PC-9 (cell line): ENCODE measurements at regions of chr3 and their contacts with region 1.

Region 1: GRCh38 chr3:100708967-100709841 is at the start of gene TFG:
- DNase-seq: peak; percentile 99 to 100
- H3K4me3 ChIP-seq: peak within 1 kb of the TSS; percentile 84
- H3K27ac ChIP-seq: peak within 1 kb of the TSS; percentile 95
- H3K4me1 ChIP-seq: peaks cover 35% of the 10 kb centered on the region
- H3K27me3 ChIP-seq: no peaks in the 10 kb centered on the region
- CTCF ChIP-seq: no peak
- total RNA-seq, gene TFG: 163 and 224 TPM in 2 replicates

Region 2: DNA sequence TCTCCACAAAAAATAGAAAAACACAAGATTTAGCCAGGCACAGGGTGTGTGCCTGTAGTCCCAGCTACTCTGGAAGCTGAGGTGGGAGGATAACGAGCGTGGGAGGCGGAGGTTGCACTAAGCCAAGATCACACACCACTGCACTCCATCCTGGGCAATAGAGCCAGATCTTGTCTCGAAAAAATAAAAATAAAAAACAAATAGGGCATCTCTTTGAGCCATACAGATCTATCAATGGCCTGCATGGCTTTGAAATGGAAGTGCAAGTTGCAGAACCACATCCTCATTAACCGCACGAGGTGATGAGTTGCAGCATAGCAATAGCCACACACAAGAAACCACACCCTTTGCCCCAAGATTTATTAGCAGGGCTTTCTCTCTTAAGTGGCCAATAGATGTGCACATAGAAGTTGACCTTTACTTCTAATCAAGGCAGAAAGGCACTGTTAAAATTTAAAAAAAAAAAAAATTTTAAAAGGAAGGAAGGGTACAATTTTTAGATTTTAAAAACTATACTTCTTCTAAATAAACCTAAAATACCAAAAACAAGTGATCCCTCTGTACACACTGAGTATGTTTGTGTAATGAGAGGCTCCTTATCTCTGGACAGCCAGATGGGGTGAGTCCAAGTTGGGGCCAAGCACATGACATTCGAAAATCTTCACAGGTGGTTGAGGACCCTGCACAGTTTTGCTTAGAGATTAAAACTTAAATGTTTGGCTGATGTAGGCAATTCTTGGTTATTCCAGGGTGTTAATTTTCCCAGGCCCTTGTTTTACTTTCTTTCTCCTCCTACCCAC is 648.3 kb before region 1 on chr3:
- CTCF ChIA-PET with region 1: no interaction called
- POLR2A ChIA-PET with region 1: interaction called, 11 read pairs
- intact Hi-C with region 1: no loop called
- DNase-seq: no peak
- H3K4me3 ChIP-seq: no peak overlapping the region
- H3K27ac ChIP-seq: no peak overlapping the region
- H3K4me1 ChIP-seq: no peaks in the 10 kb centered on the region
- H3K27me3 ChIP-seq: no peaks in the 10 kb centered on the region
- CTCF ChIP-seq: no peak

Region 3: DNA sequence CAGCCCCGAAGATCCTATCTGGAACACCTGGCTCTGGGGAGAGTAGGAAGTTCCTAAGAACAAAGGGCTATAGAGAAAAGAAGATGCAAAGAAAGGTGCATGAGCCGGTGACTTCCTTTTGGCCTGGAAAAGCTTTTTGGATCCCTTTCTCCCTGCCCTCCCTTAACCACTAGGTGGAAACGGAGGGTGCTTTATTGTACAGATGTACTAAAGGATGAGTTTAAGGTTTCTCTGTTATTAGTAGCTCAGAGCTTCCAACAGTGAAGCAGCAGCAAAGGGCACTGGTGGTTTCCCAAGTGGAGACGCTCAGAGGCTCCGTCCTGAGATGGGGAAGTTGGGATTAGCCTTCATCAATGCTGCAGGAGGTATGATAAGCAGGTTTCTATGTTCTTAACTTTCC is 105.7 kb before region 1 on chr3:
- CTCF ChIA-PET with region 1: interaction called, 12 read pairs
- POLR2A ChIA-PET with region 1: interaction called, 14 read pairs
- intact Hi-C with region 1: loop called (anchors 1 kb)
- DNase-seq: peak; percentile 41 to 60
- H3K4me3 ChIP-seq: no peak overlapping the region
- H3K27ac ChIP-seq: no peak overlapping the region
- H3K4me1 ChIP-seq: peaks cover 14% of the 10 kb centered on the region
- H3K27me3 ChIP-seq: no peaks in the 10 kb centered on the region
- CTCF ChIP-seq: peak; percentile 77

Region 4: DNA sequence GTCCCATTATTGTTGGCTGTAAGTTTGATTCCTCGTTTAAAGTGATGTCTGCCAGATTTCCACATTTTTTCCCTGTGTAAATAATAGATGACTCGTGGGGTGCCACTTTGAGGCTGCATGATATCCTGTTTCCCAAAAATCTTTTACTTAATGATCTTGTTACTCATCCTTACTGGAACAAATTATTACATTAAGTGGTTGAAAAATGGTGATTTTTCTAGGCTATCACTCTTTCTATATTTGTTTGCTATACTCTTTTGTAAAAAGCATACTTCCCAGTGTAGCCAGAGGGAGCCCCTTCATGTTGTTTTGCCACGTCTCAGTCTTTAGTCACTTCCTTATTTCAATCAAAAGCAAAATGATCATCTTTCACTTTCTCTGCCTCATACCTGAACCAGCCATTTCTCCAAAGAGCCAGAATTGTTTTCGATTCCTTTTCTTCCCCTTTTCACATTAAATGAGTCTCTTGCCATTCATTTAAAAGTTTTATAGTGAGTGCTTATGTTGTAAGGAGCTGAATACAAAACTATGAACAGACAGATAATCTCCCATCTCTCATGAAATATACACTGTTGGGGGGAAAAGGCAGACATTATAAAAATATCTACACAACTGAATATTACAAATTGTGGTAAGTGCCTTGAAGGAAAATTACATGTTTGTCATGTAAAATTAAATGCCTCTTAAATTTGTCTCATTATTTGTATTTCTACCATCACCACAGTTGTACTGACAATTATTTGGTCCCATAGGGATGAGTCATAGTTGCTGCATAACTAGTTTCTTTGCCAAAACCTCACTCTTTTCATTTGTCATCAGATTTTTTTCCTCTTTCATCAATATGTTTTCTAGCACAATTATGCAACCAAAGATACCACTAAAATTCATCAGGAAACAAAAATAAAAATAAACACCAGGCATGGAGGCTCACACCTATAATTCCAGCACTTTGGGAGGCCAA is 58.3 kb before region 1 on chr3:
- CTCF ChIA-PET with region 1: no interaction called
- POLR2A ChIA-PET with region 1: interaction called, 4 read pairs
- intact Hi-C with region 1: loop called (anchors 1 kb)
- DNase-seq: peak in 1 of 2 experiments; percentile 86
- H3K4me3 ChIP-seq: peak overlapping the region; percentile 7; the same call in 1 of the 2 replicates
- H3K27ac ChIP-seq: peak overlapping the region; percentile 52
- H3K4me1 ChIP-seq: peaks cover 20% of the 10 kb centered on the region
- H3K27me3 ChIP-seq: no peaks in the 10 kb centered on the region
- CTCF ChIP-seq: peak; percentile 47